PC-3 (cell line): ENCODE measurements at regions of chr2 and their contacts with region 1.

Region 1: GRCh38 chr2:176554101-176555048 is 285.1 kb downstream of the MTX2 start:
- DNase-seq: peak; percentile 85
- ATAC-seq: peak; percentile 52
- H3K4me3 ChIP-seq: peak overlapping the region; percentile 72
- H3K27ac ChIP-seq: peak overlapping the region; percentile 54
- H3K4me1 ChIP-seq: peaks cover 32% of the 10 kb centered on the region
- H3K27me3 ChIP-seq: no peaks in the 10 kb centered on the region
- CTCF ChIP-seq: peak; percentile 89

Region 2: DNA sequence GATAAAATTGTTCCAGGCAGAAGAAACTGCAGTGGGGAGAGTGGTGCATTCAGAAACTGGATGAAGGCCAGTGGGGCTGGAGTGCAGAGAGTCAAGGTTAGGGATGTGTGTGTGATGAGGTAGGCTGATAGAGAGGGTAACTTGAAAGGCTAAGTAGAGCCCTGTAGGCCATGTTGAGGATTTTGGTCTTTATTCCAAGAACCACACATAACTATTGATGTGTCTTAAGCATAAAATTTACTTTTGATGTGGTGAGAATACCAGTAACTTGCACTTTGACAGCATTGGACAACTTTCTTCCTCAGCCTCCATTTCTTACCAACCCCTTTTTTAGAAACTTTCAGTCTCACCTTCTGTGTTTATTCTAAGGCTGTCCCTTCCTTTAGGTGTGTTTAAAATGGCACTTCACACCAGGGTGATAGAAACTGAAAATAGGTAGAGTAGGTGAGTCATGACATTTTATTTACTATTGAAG is 262.5 kb before region 1 on chr2:
- CTCF ChIA-PET with region 1: no interaction called
- POLR2A ChIA-PET with region 1: no interaction called
- intact Hi-C with region 1: loop called (anchors 10 kb)
- DNase-seq: peak; percentile 50
- ATAC-seq: peak; percentile 93
- H3K4me3 ChIP-seq: no peak overlapping the region
- H3K27ac ChIP-seq: peak overlapping the region; percentile 14; the same call in 1 of the 2 replicates
- H3K4me1 ChIP-seq: peaks cover 19% of the 10 kb centered on the region
- H3K27me3 ChIP-seq: no peaks in the 10 kb centered on the region
- CTCF ChIP-seq: no peak

Region 3: GRCh38 chr2:176454893-176455811 is 99.2 kb before region 1 on chr2:
- CTCF ChIA-PET with region 1: interaction called, 29 read pairs
- POLR2A ChIA-PET with region 1: no interaction called
- intact Hi-C with region 1: loop called (anchors 1 kb)
- DNase-seq: peak; percentile 92
- ATAC-seq: peak; percentile 78
- H3K4me3 ChIP-seq: no peak overlapping the region
- H3K27ac ChIP-seq: no peak overlapping the region
- H3K4me1 ChIP-seq: no peaks in the 10 kb centered on the region
- H3K27me3 ChIP-seq: no peaks in the 10 kb centered on the region
- CTCF ChIP-seq: peak; percentile 92

Region 4: GRCh38 chr2:176503776-176504175 is 50.6 kb before region 1 on chr2:
- CTCF ChIA-PET with region 1: no interaction called
- POLR2A ChIA-PET with region 1: no interaction called
- intact Hi-C with region 1: loop called (anchors 1 kb)
- DNase-seq: no peak
- ATAC-seq: peak; percentile 33; the same call in 1 of the 2 replicates
- H3K4me3 ChIP-seq: no peak overlapping the region
- H3K27ac ChIP-seq: no peak overlapping the region
- H3K4me1 ChIP-seq: no peaks in the 10 kb centered on the region
- H3K27me3 ChIP-seq: no peaks in the 10 kb centered on the region
- CTCF ChIP-seq: no peak

Region 5: DNA sequence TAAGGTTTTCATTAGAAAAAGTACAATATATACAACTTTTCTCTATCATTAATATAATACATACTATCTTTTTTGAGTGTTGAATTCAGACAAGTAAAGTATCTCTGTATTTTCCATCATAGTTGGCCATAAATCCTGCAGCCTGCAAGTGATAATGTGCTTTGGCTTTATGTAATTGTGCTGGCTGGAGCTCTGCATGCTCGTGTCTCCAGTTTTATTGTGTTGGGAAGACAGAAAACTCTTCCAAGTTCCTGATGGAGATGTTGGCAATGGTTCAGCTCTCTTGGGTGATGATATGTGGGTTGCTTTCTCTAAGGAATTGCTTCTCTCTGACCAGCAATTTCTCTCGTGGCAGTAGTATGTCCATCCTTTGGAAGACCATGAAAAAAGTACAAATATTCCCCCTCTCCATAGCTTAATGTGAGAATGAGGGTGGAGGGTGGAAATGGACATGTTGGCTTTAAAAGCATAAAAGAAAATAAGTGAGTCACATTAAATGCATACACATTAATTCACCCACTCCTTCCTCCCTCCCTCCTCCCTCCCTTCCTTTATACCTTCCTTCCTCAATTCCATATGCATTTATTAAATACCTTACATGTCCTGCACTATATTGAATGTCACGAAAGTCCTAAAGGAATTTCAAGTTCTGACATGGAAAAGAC is 59.1 kb after region 1 on chr2:
- CTCF ChIA-PET with region 1: interaction called, 11 read pairs
- POLR2A ChIA-PET with region 1: interaction called, 3 read pairs
- intact Hi-C with region 1: no loop called
- DNase-seq: peak; percentile 69
- ATAC-seq: peak; percentile 56
- H3K4me3 ChIP-seq: peak overlapping the region; percentile 29; the same call in 1 of the 2 replicates
- H3K27ac ChIP-seq: peak overlapping the region; percentile 74
- H3K4me1 ChIP-seq: peaks cover 59% of the 10 kb centered on the region
- H3K27me3 ChIP-seq: no peaks in the 10 kb centered on the region
- CTCF ChIP-seq: no peak